ENCODE measurements at regions of chr4 and their contacts with region 1.

Region 1: DNA sequence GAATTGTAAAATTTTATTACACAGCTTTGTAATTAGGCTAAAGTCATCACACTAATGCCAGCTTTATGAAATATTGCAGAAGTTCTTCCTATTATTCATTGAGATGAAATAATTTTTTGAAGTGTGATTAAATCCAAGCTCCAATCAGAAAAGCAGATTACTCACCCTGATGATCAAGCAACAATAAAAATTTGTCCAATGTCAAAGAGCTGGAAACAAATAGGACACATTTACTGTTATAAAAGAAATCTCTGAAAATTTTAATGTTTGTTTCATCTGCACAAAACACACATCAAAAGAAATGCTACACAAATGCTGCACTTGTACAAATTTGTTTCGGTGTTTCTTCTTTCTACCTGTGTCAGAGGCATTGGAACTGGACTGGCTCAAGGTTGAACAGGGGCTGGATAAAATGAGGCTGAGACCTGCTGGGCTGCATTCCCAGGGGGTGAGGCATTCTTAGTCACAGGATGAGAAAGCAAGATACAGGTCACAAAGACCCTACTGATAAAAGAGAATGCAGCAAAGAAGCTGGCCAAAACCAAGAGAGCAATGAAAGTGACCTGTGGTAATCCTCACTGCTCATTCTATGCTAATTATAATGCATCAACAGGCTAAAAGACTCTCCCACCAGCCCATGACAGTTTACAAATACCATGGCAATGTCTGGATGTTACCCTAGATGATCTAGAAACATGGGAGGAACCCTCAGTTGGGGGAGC is 78.3 kb downstream of the GASK1B start:
- DNase-seq: peak; percentile 96
- ATAC-seq: peak; percentile 89
- H3K4me3 ChIP-seq: peak overlapping the region in 1 of 2 experiments; percentile 38; a peak in 3 of 4 replicates
- H3K27ac ChIP-seq: peak overlapping the region; percentile 96
- H3K4me1 ChIP-seq: peaks cover 26 to 36% of the 10 kb centered on the region in 2 experiments
- H3K27me3 ChIP-seq: no peaks in the 10 kb centered on the region
- CTCF ChIP-seq: 0 out of 6 replicates have a peak, but pooled peaks of 1 of the 3 experiments have one; percentile 3
- POLR2A ChIP-seq: no peak
- RAD21 ChIP-seq: peak; percentile 41

Region 2: DNA sequence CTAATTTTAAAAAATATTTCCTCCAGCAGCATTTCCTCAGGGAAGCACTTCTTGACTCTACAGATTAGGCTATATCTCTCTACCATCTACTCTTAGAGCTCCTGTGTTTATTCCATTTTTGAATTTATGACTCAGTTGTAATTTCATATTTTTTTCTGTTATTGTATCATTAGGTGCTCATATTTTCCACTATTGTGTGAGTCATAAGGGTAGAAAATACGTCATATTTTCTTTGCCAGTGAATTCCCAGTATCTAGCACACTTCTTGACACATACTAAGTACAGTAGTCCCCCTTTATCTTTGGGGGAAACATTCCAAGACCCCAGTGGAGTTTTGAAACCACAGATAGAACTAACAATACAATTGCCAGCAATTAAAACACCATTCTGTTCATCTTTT is 352.9 kb before region 1 on chr4:
- CTCF ChIA-PET with region 1: no interaction called
- POLR2A ChIA-PET with region 1: no interaction called
- RAD21 ChIA-PET with region 1: no interaction called
- intact Hi-C with region 1: no loop called
- DNase-seq: no peak
- ATAC-seq: no peak
- H3K4me3 ChIP-seq: no peak overlapping the region
- H3K27ac ChIP-seq: no peak overlapping the region
- H3K4me1 ChIP-seq: no peaks in the 10 kb centered on the region
- H3K27me3 ChIP-seq: no peaks in the 10 kb centered on the region
- CTCF ChIP-seq: no peak
- POLR2A ChIP-seq: no peak
- RAD21 ChIP-seq: no peak

Region 3: DNA sequence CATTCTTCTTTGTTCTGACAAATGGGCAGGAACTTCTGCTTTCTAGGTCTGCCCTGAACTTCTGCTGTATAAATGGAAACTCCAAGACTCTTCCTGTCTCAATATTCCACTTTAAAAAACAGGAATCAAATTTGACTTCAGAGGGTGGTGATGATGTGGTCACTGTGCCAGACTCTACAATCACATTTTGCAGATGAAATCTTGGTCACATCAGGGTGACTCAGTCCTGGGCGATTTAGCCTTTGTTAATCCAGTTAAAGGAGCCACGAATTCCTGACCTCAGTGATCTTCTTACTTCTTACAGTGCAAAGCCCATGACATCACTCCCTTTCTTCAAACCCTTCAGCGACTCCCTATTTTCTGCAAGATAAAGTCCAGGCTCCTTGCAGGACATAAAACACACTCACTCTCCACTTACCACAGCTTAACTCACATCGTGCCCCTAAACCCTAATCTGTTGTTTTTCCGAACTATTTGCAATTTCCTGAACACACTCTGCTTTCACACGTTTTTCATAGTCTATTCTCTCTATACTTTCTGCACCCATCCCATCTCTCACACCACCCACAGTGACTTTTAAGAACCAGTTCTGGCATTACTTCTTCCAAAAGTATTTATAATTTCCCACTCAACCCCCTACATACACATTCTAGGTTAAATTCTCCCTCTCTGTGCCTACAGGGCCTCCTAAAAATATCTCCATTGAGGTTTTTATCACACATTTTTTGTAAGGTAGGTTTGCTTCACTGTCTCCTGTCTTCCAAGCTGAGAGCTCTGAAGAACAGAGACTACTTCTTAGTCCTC is 67.2 kb after region 1 on chr4:
- CTCF ChIA-PET with region 1: no interaction called
- POLR2A ChIA-PET with region 1: no interaction called
- RAD21 ChIA-PET with region 1: no interaction called
- intact Hi-C with region 1: loop called (anchors 5 kb)
- DNase-seq: peak; percentile 63
- ATAC-seq: peak; percentile 92
- H3K4me3 ChIP-seq: peak overlapping the region in 1 of 2 experiments; percentile 10; a peak in 2 of 4 replicates
- H3K27ac ChIP-seq: peak overlapping the region; percentile 8; the same call in 1 of the 2 replicates
- H3K4me1 ChIP-seq: peaks cover 3 to 38% of the 10 kb centered on the region in 2 experiments; a peak in 2 of 4 replicates
- H3K27me3 ChIP-seq: no peaks in the 10 kb centered on the region
- CTCF ChIP-seq: no peak
- POLR2A ChIP-seq: no peak
- RAD21 ChIP-seq: no peak

Measured in HCT116 (cell line).